Activated naive CD8-positive, alpha-beta T cell treated with anti-CD3 and anti-CD28 coated beads, Interleukin-2, amount 10 ng/mL, durations not matched to agents 7 days and 5 days (primary cell): ENCODE measurements at regions of chr19 and their contacts with region 1.

Region 1: DNA sequence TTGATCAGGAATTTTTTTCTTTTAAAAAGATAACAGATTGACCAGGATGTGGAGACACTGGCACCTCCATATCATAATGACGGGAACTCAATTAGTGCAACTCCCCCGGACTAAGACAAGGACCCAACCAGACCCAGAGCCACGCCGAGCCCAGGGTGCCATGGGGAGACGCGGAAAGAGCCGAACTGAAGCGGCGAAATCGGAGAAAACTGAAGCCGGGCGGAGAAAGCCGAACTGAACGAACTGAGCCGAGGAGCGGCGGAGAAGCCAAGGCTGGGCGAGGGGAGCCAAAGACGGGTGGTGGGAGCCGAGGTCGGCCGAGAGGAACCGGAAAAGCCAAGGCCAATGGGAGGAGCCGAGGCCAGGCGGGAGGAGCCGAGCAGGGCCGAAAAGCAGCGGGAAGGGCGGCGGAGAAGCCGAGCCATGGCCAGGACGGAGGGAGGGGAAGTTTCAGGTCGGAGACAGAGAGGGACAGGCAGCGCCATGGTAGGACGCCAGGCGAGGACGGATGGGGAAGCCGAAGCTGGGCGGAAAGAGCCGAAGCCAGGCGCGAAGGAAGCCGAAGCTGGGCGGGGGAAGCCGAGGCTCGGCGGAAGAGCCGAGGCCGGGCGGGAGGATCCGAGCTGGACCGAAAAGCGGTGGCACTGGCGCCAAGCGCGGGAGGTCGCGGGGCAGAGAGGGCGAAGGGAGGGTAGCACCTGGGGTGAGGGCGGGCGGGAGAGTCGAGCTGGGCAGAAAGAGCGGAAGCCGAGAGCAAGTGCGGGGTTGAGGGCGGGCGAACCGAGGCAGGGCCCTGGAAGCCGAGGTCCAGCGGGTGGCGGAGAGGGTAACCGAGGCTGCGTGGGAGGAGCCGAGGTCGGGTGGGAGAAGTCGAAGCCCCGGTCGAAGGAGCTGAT is 29.4 kb downstream of the ZNF557 start:
- DNase-seq: peak; percentile 91
- ATAC-seq: peak; percentile 94
- H3K4me3 Mint-ChIP-seq: peak overlapping the region; percentile 85
- H3K27ac Mint-ChIP-seq: peak overlapping the region; percentile 91
- H3K4me1 Mint-ChIP-seq: peaks cover 19% of the 10 kb centered on the region
- H3K27me3 Mint-ChIP-seq: no peaks in the 10 kb centered on the region

Region 2: GRCh38 chr19:7069042-7069903 is 29.7 kb before region 1 on chr19 and contains the start of gene ZNF557:
- POLR2A ChIA-PET with region 1: interaction called, 47 read pairs
- DNase-seq: peak; percentile 98
- ATAC-seq: peak; percentile 90
- H3K4me3 Mint-ChIP-seq: peak within 1 kb of the TSS; percentile 97
- H3K27ac Mint-ChIP-seq: peak within 1 kb of the TSS; percentile 87
- H3K4me1 Mint-ChIP-seq: peaks cover 6% of the 10 kb centered on the region
- H3K27me3 Mint-ChIP-seq: no peaks in the 10 kb centered on the region
- total RNA-seq, gene ZNF557: 20.9 to 21.1 TPM